GM12878 (cell line): ENCODE measurements at regions of chr11 and their contacts with region 1.

Region 1: GRCh38 chr11:85664615-85665481 is at the start of gene CREBZF:
- DNase-seq: peak; percentile 84
- ATAC-seq: peak; percentile 89
- H3K4me3 ChIP-seq: peak within 1 kb of the TSS; percentile 91
- H3K27ac ChIP-seq: peak within 1 kb of the TSS; percentile 87
- H3K4me1 ChIP-seq: no peaks in the 10 kb centered on the region
- H3K27me3 ChIP-seq: no peaks in the 10 kb centered on the region
- CTCF ChIP-seq: no peak
- EP300 ChIP-seq: no peak
- POLR2A ChIP-seq: peak; percentile 94
- RAD21 ChIP-seq: no peak
- polyA plus RNA-seq, gene CREBZF: 11.1 TPM

Region 2: DNA sequence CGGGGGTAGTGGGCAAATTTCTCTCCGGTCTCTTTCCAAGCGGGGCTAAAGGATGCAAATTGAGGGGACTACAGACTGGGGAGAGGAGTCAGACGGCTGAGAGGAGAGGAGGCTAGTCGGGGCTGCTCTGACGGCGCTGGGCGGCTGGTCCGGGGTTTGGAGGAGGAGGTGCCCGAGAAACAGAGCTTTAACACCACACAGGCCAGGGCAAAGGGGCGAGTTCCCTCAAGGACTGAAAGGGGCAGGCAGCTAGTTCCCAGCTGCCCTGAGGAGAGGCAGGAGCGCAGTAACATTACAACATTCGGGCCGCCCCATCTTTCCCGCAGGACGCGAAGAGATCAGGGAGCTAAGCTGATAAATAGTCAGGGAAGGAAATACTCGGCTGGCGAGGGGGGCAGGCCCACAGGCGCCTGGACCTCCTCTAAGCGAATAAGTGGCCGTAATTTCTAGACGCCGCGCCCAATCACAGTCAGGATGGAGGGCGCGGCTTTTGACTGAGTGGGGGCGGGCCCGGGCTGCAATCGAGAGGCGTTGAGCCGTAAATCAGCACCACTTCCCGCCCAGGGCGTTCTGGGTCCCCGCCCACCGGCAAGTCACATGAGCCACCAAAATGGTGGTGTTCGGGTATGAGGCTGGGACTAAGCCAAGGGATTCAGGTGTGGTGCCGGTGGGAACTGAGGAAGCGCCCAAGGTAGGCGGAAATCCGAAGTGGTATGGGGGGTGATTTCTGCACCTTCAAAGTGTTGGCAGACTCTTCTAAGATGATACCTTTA is 36.7 kb before region 1 on chr11 and contains the start of gene TMEM126B:
- CTCF ChIA-PET with region 1: interaction called, 3 read pairs
- POLR2A ChIA-PET with region 1: interaction called, 9 read pairs
- RAD21 ChIA-PET with region 1: interaction called, 10 read pairs
- SMC1A ChIA-PET with region 1: interaction called, 6 read pairs
- in situ Hi-C with region 1: no loop called
- intact Hi-C with region 1: loop called (anchors 1 kb)
- DNase-seq: peak; percentile 84
- ATAC-seq: peak; percentile 99
- H3K4me3 ChIP-seq: peak within 1 kb of the TSS; percentile 94
- H3K27ac ChIP-seq: peak within 1 kb of the TSS; percentile 55
- H3K4me1 ChIP-seq: peaks cover 8% of the 10 kb centered on the region
- H3K27me3 ChIP-seq: no peaks in the 10 kb centered on the region
- CTCF ChIP-seq: no peak
- EP300 ChIP-seq: no peak
- POLR2A ChIP-seq: peak; percentile 92
- RAD21 ChIP-seq: no peak
- polyA plus RNA-seq, gene TMEM126B: 83.8 to 117 TPM

Region 3: GRCh38 chr11:85647604-85648299 is 17.1 kb before region 1 on chr11 and contains the start of gene TMEM126A:
- CTCF ChIA-PET with region 1: interaction called, 21 read pairs
- POLR2A ChIA-PET with region 1: interaction called, 43 read pairs
- RAD21 ChIA-PET with region 1: interaction called, 10 read pairs
- SMC1A ChIA-PET with region 1: interaction called, 66 read pairs
- in situ Hi-C with region 1: no loop called
- intact Hi-C with region 1: loop called (anchors 2 kb)
- DNase-seq: peak; percentile 64
- ATAC-seq: peak; percentile 99
- H3K4me3 ChIP-seq: peak within 1 kb of the TSS; percentile 77
- H3K27ac ChIP-seq: peak within 1 kb of the TSS; percentile 85
- H3K4me1 ChIP-seq: no peaks in the 10 kb centered on the region; the same call in 1 of the 2 replicates
- H3K27me3 ChIP-seq: no peaks in the 10 kb centered on the region
- CTCF ChIP-seq: no peak
- EP300 ChIP-seq: no peak
- POLR2A ChIP-seq: peak; percentile 97
- RAD21 ChIP-seq: no peak
- polyA plus RNA-seq, gene TMEM126A: 184 to 208 TPM

Region 4: DNA sequence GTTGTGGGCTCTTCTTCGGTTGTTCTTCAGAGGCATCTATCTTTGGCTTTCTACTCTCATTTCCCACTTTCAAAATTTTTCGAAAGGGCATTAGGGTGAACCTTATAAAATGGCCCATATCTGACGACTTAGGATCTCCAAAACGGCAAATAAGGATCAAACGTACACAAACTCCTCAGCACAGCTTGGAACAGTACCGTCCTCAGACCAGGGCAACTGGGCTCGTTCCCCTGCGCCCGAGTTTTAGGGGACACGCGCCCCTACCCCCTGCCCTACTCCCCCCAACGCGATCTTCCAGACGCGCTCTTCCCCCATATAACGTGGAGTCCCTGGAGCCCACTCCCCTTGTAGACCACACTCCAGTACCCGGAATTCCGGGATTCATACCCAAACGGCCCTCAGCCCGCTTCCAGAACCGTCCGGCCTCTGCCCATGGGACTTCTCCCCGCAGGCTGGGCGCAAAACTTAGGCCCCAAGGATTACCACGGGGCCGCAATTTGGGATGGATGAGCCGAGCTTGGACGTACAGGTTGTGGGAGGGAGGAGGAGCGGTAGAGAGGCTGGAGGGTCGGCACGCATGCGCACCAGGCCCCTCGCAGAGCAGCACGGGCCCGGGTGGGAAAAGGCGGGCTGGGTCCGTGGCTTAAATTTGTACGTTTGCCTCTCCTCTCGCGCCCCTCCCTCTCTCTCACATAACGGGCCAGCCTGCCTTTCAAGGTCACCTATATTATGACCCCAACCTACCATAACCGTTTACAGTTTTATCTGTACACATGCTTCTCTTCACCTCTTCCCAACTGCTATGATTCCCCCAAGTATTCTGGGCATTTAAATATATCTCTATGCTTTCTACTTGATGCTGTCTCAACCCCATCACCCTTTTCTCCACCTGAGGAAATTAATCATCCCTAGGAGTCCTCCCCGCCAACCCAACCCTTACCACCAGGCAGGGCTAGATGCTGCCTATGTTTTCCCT is 17.8 kb after region 1 on chr11:
- CTCF ChIA-PET with region 1: interaction called, 4 read pairs
- POLR2A ChIA-PET with region 1: interaction called, 3 read pairs
- RAD21 ChIA-PET with region 1: interaction called, 5 read pairs
- SMC1A ChIA-PET with region 1: interaction called, 10 read pairs
- in situ Hi-C with region 1: no loop called
- intact Hi-C with region 1: no loop called
- DNase-seq: no peak
- ATAC-seq: peak; percentile 95
- H3K4me3 ChIP-seq: peak overlapping the region; percentile 95
- H3K27ac ChIP-seq: peak overlapping the region; percentile 47
- H3K4me1 ChIP-seq: peaks cover 5% of the 10 kb centered on the region; the same call in 1 of the 2 replicates
- H3K27me3 ChIP-seq: 0 out of 4 replicates have a peak, but pooled peaks cover 0 to 3% of the 10 kb centered on the region in 2 experiments
- CTCF ChIP-seq: no peak
- EP300 ChIP-seq: no peak
- POLR2A ChIP-seq: peak; percentile 72
- RAD21 ChIP-seq: no peak